Activated CD8-positive, alpha-beta T cell treated with anti-CD3 and anti-CD28 coated beads, Interleukin-2, amount 10 ng/mL, durations not matched to agents 7 days and 5 days (primary cell): ENCODE measurements at regions of chr14 and their contacts with region 1.

Region 1: DNA sequence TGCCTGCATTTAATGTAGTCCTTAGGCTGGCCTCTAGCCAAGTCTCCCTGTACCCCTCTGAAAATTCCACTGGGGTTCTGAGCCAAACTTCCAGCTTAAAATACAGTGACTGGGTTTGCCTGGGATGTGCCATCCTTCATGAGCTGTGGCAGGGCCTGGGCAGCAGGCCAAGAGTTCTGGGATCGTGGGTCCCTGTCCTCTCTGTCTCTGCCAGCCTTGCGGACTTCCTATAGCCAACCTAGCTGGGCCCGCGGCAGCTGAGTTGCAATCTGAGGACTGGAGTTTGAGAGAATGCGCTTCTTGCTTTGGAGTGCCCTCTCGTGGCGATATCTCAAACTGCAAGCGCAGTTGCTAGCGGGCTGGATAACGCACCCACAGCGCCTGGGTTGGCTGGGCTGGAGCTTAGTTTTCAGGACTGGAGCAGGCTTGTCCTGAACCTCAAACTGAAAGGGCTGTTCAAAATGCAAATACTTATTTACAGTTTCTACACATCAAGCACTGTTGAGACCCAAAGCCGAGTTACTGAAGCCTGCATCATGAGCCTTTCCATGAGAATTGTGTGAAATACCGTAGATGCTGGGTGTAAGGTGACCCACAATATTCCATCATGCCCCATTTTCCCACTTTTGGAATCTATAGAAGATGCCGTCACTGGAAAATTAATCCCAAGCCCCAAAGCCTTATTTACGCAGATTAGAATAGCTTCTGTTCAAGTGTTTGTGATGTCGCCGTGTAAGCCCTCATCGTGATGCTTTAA is 7.3 kb upstream of the IFI27L2 start:
- DNase-seq: peak; percentile 89
- ATAC-seq: peak; percentile 85
- H3K4me3 Mint-ChIP-seq: no peak overlapping the region
- H3K27ac Mint-ChIP-seq: no peak overlapping the region
- H3K4me1 Mint-ChIP-seq: peaks cover 5% of the 10 kb centered on the region
- H3K27me3 Mint-ChIP-seq: peaks cover 21% of the 10 kb centered on the region

Region 2: GRCh38 chr14:94026173-94026888 is 110.4 kb before region 1 on chr14 and contains the start of gene OTUB2:
- CTCF ChIA-PET with region 1: interaction called, 21 read pairs
- POLR2A ChIA-PET with region 1: no interaction called
- DNase-seq: peak; percentile 98
- ATAC-seq: peak; percentile 99
- H3K4me3 Mint-ChIP-seq: peak within 1 kb of the TSS; percentile 71
- H3K27ac Mint-ChIP-seq: peak within 1 kb of the TSS; percentile 68
- H3K4me1 Mint-ChIP-seq: peaks cover 48% of the 10 kb centered on the region
- H3K27me3 Mint-ChIP-seq: peaks cover 9% of the 10 kb centered on the region
- total RNA-seq, gene OTUB2: 1.4 to 1.7 TPM

Region 3: DNA sequence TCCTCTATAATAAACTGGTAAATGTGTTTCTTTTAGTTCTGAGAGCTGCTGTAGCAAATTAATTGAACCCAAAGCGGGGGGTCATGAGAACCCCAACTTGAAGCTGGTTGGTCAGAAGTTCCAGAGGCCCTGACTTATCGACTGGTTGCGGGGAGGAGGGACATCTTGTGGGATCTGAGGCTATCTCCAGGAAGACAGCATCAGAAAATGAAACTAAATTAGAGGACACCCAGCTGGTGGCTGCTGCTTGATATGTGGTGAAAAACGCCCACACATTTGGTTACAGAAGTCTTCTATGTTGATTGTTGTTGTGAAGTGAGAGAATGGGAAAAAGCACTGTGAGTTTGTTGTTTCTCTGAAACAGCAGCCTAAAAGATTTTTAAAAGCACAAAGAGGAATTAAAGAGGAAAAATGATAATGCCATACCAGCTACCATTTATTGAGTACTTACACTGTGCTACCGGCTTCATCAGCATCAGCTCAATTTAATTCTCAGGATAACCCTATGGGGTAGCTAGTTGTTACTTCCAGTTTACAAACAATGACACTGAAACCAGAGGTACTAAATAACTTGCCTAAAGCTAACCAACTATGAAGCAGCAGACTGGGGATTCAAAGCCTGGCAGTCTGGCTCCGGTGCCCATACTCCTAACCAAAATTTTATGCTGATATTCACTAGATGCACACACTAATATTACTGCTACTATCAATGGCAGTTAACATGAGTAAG is 80.0 kb before region 1 on chr14:
- CTCF ChIA-PET with region 1: interaction called, 44 read pairs
- POLR2A ChIA-PET with region 1: no interaction called
- DNase-seq: peak; percentile 59
- ATAC-seq: peak; percentile 66
- H3K4me3 Mint-ChIP-seq: peak overlapping the region; percentile 37
- H3K27ac Mint-ChIP-seq: peak overlapping the region; percentile 71
- H3K4me1 Mint-ChIP-seq: peaks cover 67% of the 10 kb centered on the region
- H3K27me3 Mint-ChIP-seq: no peaks in the 10 kb centered on the region

Region 4: GRCh38 chr14:94115058-94115591 is 21.6 kb before region 1 on chr14:
- CTCF ChIA-PET with region 1: interaction called, 18 read pairs
- POLR2A ChIA-PET with region 1: no interaction called
- DNase-seq: no peak
- ATAC-seq: no peak
- H3K4me3 Mint-ChIP-seq: no peak overlapping the region
- H3K27ac Mint-ChIP-seq: peak overlapping the region; percentile 18
- H3K4me1 Mint-ChIP-seq: peaks cover 41% of the 10 kb centered on the region
- H3K27me3 Mint-ChIP-seq: no peaks in the 10 kb centered on the region

Region 5: DNA sequence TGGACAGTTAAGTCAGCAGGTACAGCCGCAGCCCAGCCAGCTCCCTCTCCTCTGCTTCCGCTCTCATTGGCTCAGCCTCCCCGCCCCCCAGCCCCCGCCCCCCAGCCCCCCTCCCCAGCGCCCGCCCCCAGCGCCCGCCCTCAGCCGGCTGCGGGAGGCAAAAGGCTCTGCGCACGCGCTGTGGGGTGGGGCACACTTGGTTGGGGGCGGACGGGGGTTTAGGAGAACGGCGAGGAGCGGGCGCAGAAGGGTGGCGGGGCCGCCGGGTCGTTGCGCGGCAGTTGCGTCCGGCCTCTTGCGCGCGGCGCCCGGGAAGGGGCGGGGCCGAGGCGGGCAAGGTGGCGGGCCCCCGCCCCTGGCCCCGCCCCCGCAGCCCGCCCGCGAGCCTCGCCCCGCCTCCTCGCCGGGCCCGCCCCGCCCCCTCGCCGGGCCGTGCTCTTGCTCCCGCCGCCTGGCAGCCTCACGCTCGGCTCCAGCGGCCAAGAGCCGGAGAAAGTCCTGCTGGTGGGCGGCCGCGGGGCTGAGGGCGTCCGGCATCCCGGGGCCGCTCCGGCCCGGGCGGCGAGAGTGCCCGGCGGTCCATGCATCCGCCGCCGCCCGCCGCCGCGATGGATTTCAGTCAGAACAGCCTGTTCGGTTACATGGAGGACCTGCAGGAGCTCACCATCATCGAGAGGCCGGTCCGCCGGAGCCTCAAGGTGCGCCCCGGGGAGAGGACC is 37.3 kb after region 1 on chr14 and contains the start of gene PPP4R4:
- CTCF ChIA-PET with region 1: interaction called, 79 read pairs
- POLR2A ChIA-PET with region 1: no interaction called
- DNase-seq: peak; percentile 89
- ATAC-seq: peak; percentile 92
- H3K4me3 Mint-ChIP-seq: peak within 1 kb of the TSS; percentile 70
- H3K27ac Mint-ChIP-seq: peak within 1 kb of the TSS; percentile 59
- H3K4me1 Mint-ChIP-seq: peaks cover 18% of the 10 kb centered on the region
- H3K27me3 Mint-ChIP-seq: peaks cover 66% of the 10 kb centered on the region
- total RNA-seq, gene PPP4R4: 0.16 to 0.26 TPM

Region 6: GRCh38 chr14:94494085-94494484 is 357.3 kb after region 1 on chr14:
- CTCF ChIA-PET with region 1: no interaction called
- POLR2A ChIA-PET with region 1: no interaction called
- DNase-seq: no peak
- ATAC-seq: no peak
- H3K4me3 Mint-ChIP-seq: no peak overlapping the region
- H3K27ac Mint-ChIP-seq: no peak overlapping the region
- H3K4me1 Mint-ChIP-seq: no peaks in the 10 kb centered on the region
- H3K27me3 Mint-ChIP-seq: peaks cover 4% of the 10 kb centered on the region